ENCODE measurements at regions of chr2 and their contacts with region 1.

Region 1: GRCh38 chr2:187499941-187500532 is 52.0 kb upstream of the CALCRL start:
- DNase-seq: peak; percentile 22
- H3K4me3 ChIP-seq: no peak overlapping the region; a peak in 1 of 4 replicates
- H3K27ac ChIP-seq: peak overlapping the region in 1 of 2 experiments; percentile 54; a peak in 2 of 4 replicates
- H3K4me1 ChIP-seq: peaks cover 11 to 21% of the 10 kb centered on the region in 2 experiments
- H3K27me3 ChIP-seq: no peaks in the 10 kb centered on the region
- CTCF ChIP-seq: peak; percentile 88
- EP300 ChIP-seq: no peak
- RAD21 ChIP-seq: peak; percentile 98

Region 2: GRCh38 chr2:186862869-186863709 is 636.9 kb before region 1 on chr2:
- CTCF ChIA-PET with region 1: interaction called, 13 read pairs
- POLR2A ChIA-PET with region 1: no interaction called
- DNase-seq: peak; percentile 34
- H3K4me3 ChIP-seq: no peak overlapping the region; a peak in 1 of 4 replicates
- H3K27ac ChIP-seq: no peak overlapping the region
- H3K4me1 ChIP-seq: peaks cover 0 to 7% of the 10 kb centered on the region in 2 experiments; a peak in 2 of 4 replicates
- H3K27me3 ChIP-seq: no peaks in the 10 kb centered on the region
- CTCF ChIP-seq: peak; percentile 84
- EP300 ChIP-seq: no peak
- RAD21 ChIP-seq: peak; percentile 93

Region 3: GRCh38 chr2:187155476-187155875 is 344.6 kb before region 1 on chr2:
- CTCF ChIA-PET with region 1: no interaction called
- POLR2A ChIA-PET with region 1: no interaction called
- DNase-seq: no peak
- H3K4me3 ChIP-seq: no peak overlapping the region
- H3K27ac ChIP-seq: no peak overlapping the region
- H3K4me1 ChIP-seq: no peaks in the 10 kb centered on the region
- H3K27me3 ChIP-seq: no peaks in the 10 kb centered on the region
- CTCF ChIP-seq: no peak
- EP300 ChIP-seq: no peak
- RAD21 ChIP-seq: no peak

Region 4: DNA sequence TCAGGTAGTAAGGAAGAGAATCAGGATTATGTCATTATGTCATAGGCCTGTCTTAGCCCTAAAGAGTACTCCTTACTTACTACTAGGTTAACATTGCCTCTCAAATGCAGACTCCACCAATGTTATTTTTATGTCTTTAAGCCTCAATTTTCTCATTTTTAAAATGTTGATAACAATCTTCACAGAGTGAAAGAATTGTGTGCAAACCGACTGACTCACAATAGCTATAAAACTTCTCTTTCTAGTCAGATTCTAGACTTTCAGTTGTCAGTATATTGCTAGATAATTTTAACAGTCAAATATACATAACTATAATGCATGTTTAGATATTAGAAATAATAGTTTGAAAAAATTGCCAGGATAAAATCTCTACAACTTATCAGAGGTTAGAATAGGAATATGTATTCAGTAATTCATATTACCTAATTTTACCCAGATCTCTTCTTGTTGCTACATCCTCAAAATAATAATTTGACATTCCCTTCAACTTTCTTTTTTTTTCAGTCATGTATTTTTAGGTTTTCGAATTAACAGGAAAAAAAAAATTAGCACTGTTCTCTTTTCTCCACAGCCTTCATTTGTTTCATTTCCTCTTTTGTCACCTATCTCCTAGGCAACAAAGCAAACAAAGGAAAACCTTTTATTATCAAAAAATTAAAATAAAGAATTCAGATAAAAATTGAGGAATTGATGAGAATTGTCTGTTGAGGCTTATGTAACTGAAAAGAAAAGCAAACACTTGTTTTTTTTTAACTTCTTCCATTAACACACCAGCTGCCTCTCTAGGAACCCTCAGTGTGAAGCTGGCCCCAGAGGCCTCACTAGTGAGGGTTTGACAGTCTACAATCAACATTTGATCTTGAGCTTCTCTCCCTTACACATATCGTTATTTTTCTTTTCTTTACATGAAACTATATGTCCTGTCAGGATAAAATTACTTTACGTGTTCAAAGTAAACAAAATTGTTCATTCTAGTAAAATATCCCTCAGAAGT is 331.0 kb before region 1 on chr2:
- CTCF ChIA-PET with region 1: no interaction called
- POLR2A ChIA-PET with region 1: no interaction called
- DNase-seq: no peak
- H3K4me3 ChIP-seq: no peak overlapping the region
- H3K27ac ChIP-seq: no peak overlapping the region
- H3K4me1 ChIP-seq: no peaks in the 10 kb centered on the region; a peak in 1 of 4 replicates
- H3K27me3 ChIP-seq: no peaks in the 10 kb centered on the region
- CTCF ChIP-seq: no peak
- EP300 ChIP-seq: no peak
- RAD21 ChIP-seq: no peak

Region 5: GRCh38 chr2:187482796-187483195 is 17.2 kb before region 1 on chr2:
- CTCF ChIA-PET with region 1: interaction called, 10 read pairs
- POLR2A ChIA-PET with region 1: no interaction called
- DNase-seq: no peak
- H3K4me3 ChIP-seq: no peak overlapping the region
- H3K27ac ChIP-seq: no peak overlapping the region
- H3K4me1 ChIP-seq: no peaks in the 10 kb centered on the region; a peak in 1 of 4 replicates
- H3K27me3 ChIP-seq: no peaks in the 10 kb centered on the region
- CTCF ChIP-seq: no peak
- EP300 ChIP-seq: no peak
- RAD21 ChIP-seq: no peak

Region 6: GRCh38 chr2:188291617-188292347 is 791.7 kb after region 1 on chr2 and contains the start of gene GULP1:
- CTCF ChIA-PET with region 1: interaction called, 23 read pairs
- POLR2A ChIA-PET with region 1: no interaction called
- DNase-seq: peak; percentile 85
- H3K4me3 ChIP-seq: peak within 1 kb of the TSS; percentile 88 to 97
- H3K27ac ChIP-seq: peak within 1 kb of the TSS; percentile 88 to 99
- H3K4me1 ChIP-seq: peaks cover 2 to 5% of the 10 kb centered on the region in 2 experiments; a peak in 2 of 4 replicates
- H3K27me3 ChIP-seq: no peaks in the 10 kb centered on the region
- CTCF ChIP-seq: peak; percentile 73
- EP300 ChIP-seq: no peak; a peak in 1 of 4 replicates
- RAD21 ChIP-seq: peak; percentile 66
- polyA plus RNA-seq, gene GULP1: 33.8 and 35.0 TPM in 2 replicates

Region 7: DNA sequence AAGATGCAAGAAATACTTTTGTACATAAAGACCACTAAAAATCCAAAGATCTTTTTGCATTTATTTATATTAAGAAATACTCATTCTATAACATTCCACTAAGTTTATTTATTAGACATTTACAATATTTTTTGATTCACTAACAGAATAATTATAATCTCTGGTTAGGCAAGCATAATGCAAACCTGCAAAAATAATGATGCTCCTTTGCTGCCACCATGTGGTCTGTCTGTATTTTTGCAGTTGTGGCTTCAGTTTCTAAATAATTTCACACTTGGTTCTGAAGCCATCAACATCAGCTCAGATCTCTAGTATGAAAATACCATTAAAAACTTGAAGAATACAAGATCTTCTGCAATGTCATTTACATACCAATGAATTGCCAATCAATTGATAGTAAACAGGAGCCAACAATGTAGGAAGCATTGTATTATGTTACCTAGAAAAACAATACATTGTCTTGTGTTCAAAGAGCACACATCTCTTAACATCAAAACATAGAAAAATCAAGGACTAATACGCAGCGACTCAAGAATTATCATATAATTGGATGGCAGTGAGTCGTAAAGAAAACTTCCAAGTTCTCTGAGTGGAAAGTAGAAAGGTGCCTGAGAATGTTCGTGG is 1912.4 kb after region 1 on chr2:
- CTCF ChIA-PET with region 1: interaction called, 19 read pairs
- POLR2A ChIA-PET with region 1: no interaction called
- DNase-seq: peak; percentile 32
- H3K4me3 ChIP-seq: no peak overlapping the region
- H3K27ac ChIP-seq: peak overlapping the region; percentile 89 to 100
- H3K4me1 ChIP-seq: peaks cover 18 to 33% of the 10 kb centered on the region in 2 experiments; a peak in 3 of 4 replicates
- H3K27me3 ChIP-seq: no peaks in the 10 kb centered on the region
- CTCF ChIP-seq: peak; percentile 79
- EP300 ChIP-seq: no peak
- RAD21 ChIP-seq: peak; percentile 94

Measured in SK-N-SH (cell line).